Activated CD4-positive, alpha-beta T cell treated with anti-CD3 and anti-CD28 coated beads for 36 hours (primary cell): ENCODE measurements at regions of chr9 and their contacts with region 1.

Region 1: GRCh38 chr9:128798896-128799295 is 11.8 kb downstream of the TBC1D13 start:
- DNase-seq: no peak
- ATAC-seq: no peak
- H3K4me3 Mint-ChIP-seq: no peak overlapping the region
- H3K27ac Mint-ChIP-seq: no peak overlapping the region
- H3K4me1 Mint-ChIP-seq: no peaks in the 10 kb centered on the region
- H3K27me3 Mint-ChIP-seq: no peaks in the 10 kb centered on the region

Region 2: GRCh38 chr9:128231638-128232527 is 567.0 kb before region 1 on chr9:
- CTCF ChIA-PET with region 1: no interaction called
- POLR2A ChIA-PET with region 1: interaction called, 13 read pairs
- intact Hi-C with region 1: no loop called
- DNase-seq: peak; percentile 36
- ATAC-seq: peak; percentile 55
- H3K4me3 Mint-ChIP-seq: no peak overlapping the region
- H3K27ac Mint-ChIP-seq: no peak overlapping the region
- H3K4me1 Mint-ChIP-seq: no peaks in the 10 kb centered on the region
- H3K27me3 Mint-ChIP-seq: no peaks in the 10 kb centered on the region

Region 3: DNA sequence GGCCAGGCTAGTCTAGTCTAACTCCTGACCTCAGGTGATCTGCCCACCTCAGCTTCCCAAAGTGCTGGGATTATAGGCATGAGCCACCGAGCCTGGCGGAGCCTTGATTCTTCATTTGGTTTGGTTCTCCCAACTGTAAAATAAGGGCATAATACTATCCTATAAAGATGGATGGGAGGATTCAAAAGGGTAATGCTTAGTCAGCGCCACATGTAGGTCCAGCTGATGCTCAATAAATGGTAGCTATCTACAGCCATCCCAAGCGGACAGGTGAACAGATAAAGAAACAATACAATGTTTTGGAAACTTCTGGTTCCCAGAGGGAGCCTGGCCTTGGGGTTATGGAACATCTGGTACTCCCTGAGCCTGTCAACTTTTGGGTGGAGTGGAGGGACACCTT is 123.5 kb before region 1 on chr9:
- CTCF ChIA-PET with region 1: no interaction called
- POLR2A ChIA-PET with region 1: no interaction called
- intact Hi-C with region 1: no loop called
- DNase-seq: no peak
- ATAC-seq: no peak
- H3K4me3 Mint-ChIP-seq: no peak overlapping the region
- H3K27ac Mint-ChIP-seq: no peak overlapping the region
- H3K4me1 Mint-ChIP-seq: no peaks in the 10 kb centered on the region
- H3K27me3 Mint-ChIP-seq: no peaks in the 10 kb centered on the region

Region 4: DNA sequence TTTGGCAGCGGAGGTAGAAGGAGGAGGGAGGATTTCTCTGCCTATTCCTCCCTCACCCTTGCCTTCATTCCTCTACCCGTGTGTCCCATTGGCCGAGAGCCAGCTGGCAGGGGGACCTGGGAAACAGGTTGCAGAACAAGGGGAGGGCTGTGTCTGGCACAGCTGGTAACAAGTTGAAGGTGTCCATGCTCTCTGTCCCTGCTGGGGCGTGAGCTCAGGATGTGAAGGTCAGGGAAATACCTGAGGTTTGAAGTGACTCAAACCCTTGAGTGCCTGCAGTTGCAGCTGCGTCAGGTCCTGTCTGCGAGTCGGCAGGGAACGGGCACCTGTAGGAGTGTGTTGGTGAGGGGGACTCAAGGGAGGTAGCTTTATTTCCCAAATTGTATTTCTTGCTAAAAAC is 253.7 kb after region 1 on chr9:
- CTCF ChIA-PET with region 1: no interaction called
- POLR2A ChIA-PET with region 1: no interaction called
- intact Hi-C with region 1: no loop called
- DNase-seq: no peak
- ATAC-seq: no peak
- H3K4me3 Mint-ChIP-seq: no peak overlapping the region
- H3K27ac Mint-ChIP-seq: no peak overlapping the region
- H3K4me1 Mint-ChIP-seq: no peaks in the 10 kb centered on the region
- H3K27me3 Mint-ChIP-seq: no peaks in the 10 kb centered on the region